Adrenal gland (tissue), 19 donors: ENCODE measurements at regions of chr14 and their contacts with region 1.

Region 1: GRCh38 chr14:45134051-45134958 is at the start of gene FKBP3:
- DNase-seq: peak; percentile 96 to 99 (median 99)
- H3K4me3 ChIP-seq: peak within 1 kb of the TSS; percentile 73 to 85 (median 78)
- H3K27ac ChIP-seq: peak within 1 kb of the TSS; percentile 70 to 91 (median 79)
- H3K4me1 ChIP-seq: peaks cover 9 to 37% of the 10 kb centered on the region in 2 donors
- H3K27me3 ChIP-seq: no peaks in the 10 kb centered on the region
- CTCF ChIP-seq: peak in 1 of 6 experiments; percentile 7
- POLR2A ChIP-seq: peak; percentile 80 to 91
- total RNA-seq, gene FKBP3: 15.7 to 70.2 (median 46.3) TPM

Region 2: GRCh38 chr14:44912041-44912869 is 222.1 kb before region 1 on chr14:
- intact Hi-C with region 1: loop called in 1 of 2 experiments (anchors 10 kb)
- DNase-seq: peak in 2 of 7 donors; percentile 9 to 17
- H3K4me3 ChIP-seq: peak overlapping the region in 2 of 4 donors; percentile 32 to 74
- H3K27ac ChIP-seq: no peak overlapping the region
- H3K4me1 ChIP-seq: peaks cover 0 to 9% of the 10 kb centered on the region in 2 donors
- H3K27me3 ChIP-seq: no peaks in the 10 kb centered on the region
- CTCF ChIP-seq: no peak
- POLR2A ChIP-seq: no peak

Region 3: GRCh38 chr14:44961604-44962333 is 172.5 kb before region 1 on chr14 and contains the starts of genes KLHL28 and TOGARAM1:
- intact Hi-C with region 1: loop called in 1 of 2 experiments (anchors 10 kb)
- DNase-seq: peak; percentile 97 to 100 (median 100)
- H3K4me3 ChIP-seq: peak within 1 kb of the TSS; percentile 55 to 75 (median 61)
- H3K27ac ChIP-seq: peak within 1 kb of the TSS; percentile 75 to 98 (median 93)
- H3K4me1 ChIP-seq: peaks cover 16 to 74% of the 10 kb centered on the region in 2 donors
- H3K27me3 ChIP-seq: no peaks in the 10 kb centered on the region
- CTCF ChIP-seq: no peak
- POLR2A ChIP-seq: peak; percentile 81 to 97
- total RNA-seq, gene KLHL28: 3.7 to 17.8 (median 11.6) TPM
- total RNA-seq, gene TOGARAM1: 10.2 to 42.0 (median 20.9) TPM

Region 4: DNA sequence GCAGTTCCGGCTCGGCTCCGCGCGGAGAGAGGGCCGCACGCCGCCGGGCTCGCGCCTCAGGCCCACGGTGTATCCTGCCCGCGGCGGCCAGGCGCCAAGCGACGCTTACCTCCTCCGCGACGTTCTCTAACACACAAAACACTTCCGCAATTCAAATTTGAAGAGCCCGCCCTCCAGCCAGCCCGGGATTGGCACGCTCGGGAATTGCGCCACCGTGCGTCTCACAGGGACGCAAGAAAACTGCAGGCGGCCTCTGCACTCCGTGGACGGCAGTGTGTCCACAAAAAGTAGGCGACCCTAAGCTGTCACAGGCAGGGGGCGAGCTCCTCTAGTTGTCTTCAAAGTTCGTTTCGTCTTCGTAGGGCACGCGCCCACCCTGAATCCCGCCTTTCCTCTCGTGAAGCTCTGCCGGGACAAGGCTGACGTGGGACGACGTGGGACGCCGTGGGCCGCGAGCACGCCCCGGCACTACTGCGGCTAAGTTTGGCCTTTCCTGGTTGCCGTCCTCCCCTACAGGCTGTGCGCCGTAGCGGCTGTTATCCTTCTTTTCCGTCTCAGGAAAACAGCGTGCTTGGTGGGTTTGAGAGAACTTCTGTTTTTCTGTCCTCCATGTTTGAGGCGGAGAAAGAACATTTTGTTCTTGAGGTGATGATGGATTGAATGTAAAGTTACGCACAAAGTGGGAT is 118.9 kb after region 1 on chr14 and contains the start of gene MIS18BP1:
- intact Hi-C with region 1: loop called in 1 of 2 experiments (anchors 10 kb)
- DNase-seq: peak; percentile 95 to 98 (median 97)
- H3K4me3 ChIP-seq: peak within 1 kb of the TSS in 3 of 4 donors; percentile 37 to 75 (median 41)
- H3K27ac ChIP-seq: peak within 1 kb of the TSS; percentile 76 to 92 (median 92)
- H3K4me1 ChIP-seq: peaks cover 0 to 25% of the 10 kb centered on the region in 2 donors
- H3K27me3 ChIP-seq: no peaks in the 10 kb centered on the region
- CTCF ChIP-seq: peak; percentile 49 to 88 (median 66)
- POLR2A ChIP-seq: peak; percentile 26 to 71
- total RNA-seq, gene MIS18BP1: 8.7 to 37.9 (median 14.0) TPM

Region 5: DNA sequence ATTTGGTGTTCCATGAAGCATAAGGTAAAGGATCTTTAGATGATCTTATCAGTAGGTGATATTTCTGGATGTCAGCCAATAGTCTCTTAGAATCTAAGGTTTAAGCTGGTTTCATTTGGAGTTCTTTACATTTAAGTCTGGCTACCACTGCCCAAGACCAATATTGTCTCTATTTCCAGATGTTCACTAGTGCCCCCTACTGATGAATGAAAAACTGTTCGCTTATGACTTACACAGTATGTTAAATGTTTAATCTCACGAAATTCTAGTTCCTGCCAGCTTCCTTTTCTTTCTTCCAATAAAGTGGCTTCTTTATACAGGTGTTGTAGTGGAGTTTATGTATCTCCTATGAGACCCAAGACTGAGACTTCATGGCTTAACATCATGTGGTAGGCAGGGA is 150.5 kb after region 1 on chr14:
- intact Hi-C with region 1: no loop called
- DNase-seq: no peak
- H3K4me3 ChIP-seq: no peak overlapping the region
- H3K27ac ChIP-seq: no peak overlapping the region
- H3K4me1 ChIP-seq: no peaks in the 10 kb centered on the region
- H3K27me3 ChIP-seq: no peaks in the 10 kb centered on the region
- CTCF ChIP-seq: no peak
- POLR2A ChIP-seq: no peak